Activated naive CD4-positive, alpha-beta T cell treated with anti-CD3 and anti-CD28 coated beads for 36 hours (primary cell): ENCODE measurements at regions of chr6 and their contacts with region 1.

Region 1: DNA sequence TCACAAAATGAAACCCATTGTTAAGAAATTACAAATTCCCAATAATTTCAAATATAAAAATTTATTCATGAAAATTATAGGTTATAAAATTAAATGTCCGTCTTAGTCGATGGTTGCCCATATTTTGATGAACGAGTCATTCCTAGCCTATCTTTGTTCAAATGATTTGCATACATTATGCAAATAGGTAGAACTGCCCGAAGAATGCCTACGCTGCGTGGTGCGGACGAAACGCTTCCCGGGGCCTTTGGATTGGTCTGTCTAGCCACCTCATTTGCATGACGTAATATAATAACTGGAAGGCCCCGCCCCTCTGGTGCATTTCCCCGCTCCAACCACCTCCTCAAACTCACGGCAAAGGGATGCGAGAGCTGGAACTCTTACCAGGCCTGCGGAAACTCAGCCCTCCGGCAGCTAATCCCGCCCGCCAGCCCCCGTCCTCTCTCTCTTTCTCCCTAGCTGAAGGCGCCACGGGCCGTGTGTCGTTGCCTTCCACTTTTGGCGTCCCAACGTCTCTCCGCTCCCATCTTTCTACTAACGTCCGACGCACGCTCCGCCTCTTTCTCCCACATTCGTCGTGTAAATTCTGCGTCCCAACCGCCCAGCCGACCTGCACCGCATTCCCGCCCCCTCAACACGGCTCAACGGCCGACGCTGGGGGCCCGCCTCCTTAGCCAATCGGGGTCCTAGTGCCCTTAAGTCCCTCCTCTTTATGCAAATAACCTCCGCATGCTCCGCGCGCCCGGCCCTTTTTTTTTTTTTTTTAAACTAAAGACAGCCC is 520 bp upstream of the PRRC2A start:
- DNase-seq: peak; percentile 99
- H3K4me3 Mint-ChIP-seq: peak overlapping the region; percentile 83
- H3K27ac Mint-ChIP-seq: peak overlapping the region; percentile 97
- H3K4me1 Mint-ChIP-seq: peaks cover 55% of the 10 kb centered on the region
- H3K27me3 Mint-ChIP-seq: no peaks in the 10 kb centered on the region

Region 2: DNA sequence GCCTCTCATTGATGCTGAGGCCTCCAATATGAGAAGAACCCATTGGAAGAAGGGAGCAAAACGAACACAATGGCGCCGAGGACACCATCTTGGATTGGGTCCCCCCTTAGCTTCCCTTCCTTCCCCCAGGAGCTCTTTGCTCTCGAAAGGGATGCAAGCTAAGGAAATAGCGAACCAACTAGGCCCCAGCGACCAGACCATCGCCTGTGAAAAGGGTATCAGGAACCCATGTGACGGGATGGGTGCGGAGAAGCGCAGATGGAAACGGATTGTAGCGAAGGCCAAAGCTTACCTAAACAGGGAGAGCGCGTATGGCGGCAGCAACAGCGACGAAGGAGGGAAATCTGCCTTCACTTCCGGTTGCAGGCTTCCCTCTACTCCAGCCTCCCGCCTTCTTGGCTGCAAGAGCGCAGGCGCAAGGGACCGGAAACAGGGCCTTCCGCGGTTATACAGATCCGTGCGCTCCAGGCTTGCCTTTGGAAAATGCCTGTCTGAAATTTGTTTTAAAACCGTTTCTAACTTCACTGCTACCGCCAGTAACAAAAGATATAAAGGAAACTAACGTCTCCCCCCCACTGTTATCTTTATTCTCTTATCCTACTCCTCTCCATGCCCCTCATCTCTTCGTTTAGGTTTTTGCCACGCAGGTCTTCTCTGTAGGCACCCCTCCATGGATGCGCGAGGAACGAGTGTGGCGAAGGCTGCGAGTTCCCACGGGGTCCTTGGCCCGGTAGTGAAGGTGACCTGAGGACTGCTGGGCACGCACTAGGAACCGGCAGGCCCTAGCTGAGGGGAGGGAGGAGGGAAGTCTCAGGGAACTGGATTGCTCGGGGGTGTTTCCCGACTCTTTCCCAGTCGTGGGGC is 78.1 kb before region 1 on chr6 and contains the start of gene DDX39B:
- CTCF ChIA-PET with region 1: interaction called, 5 read pairs
- intact Hi-C with region 1: loop called (anchors 1 kb)
- DNase-seq: peak; percentile 95
- H3K4me3 Mint-ChIP-seq: peak within 1 kb of the TSS; percentile 93
- H3K27ac Mint-ChIP-seq: peak within 1 kb of the TSS; percentile 99
- H3K4me1 Mint-ChIP-seq: peaks cover 40% of the 10 kb centered on the region
- H3K27me3 Mint-ChIP-seq: no peaks in the 10 kb centered on the region
- total RNA-seq, gene DDX39B: 600 to 624 TPM

Region 3: DNA sequence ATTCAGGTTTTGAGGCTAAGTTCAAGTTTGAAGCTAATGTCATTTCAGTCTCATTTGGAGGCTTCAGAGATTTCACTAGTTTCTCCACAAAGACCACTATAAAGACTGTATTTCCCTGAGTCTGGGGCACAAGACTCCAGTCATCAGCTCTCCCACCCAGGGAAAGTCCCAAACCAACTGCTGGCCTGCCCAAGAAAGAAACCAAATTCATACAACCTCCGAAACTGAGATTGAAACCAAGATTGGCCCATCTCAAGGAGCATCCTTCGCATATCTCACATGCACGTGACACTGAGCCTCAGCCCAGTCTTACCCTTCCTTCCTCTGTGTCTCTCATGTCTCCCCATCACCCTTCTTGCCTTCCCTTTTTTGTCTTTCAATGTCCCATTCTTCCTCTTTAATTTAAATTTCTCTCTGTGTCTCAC is 51.4 kb before region 1 on chr6:
- CTCF ChIA-PET with region 1: no interaction called
- intact Hi-C with region 1: loop called (anchors 1 kb)
- DNase-seq: peak; percentile 85
- H3K4me3 Mint-ChIP-seq: peak overlapping the region; percentile 34
- H3K27ac Mint-ChIP-seq: peak overlapping the region; percentile 83
- H3K4me1 Mint-ChIP-seq: peaks cover 76% of the 10 kb centered on the region
- H3K27me3 Mint-ChIP-seq: no peaks in the 10 kb centered on the region

Region 4: DNA sequence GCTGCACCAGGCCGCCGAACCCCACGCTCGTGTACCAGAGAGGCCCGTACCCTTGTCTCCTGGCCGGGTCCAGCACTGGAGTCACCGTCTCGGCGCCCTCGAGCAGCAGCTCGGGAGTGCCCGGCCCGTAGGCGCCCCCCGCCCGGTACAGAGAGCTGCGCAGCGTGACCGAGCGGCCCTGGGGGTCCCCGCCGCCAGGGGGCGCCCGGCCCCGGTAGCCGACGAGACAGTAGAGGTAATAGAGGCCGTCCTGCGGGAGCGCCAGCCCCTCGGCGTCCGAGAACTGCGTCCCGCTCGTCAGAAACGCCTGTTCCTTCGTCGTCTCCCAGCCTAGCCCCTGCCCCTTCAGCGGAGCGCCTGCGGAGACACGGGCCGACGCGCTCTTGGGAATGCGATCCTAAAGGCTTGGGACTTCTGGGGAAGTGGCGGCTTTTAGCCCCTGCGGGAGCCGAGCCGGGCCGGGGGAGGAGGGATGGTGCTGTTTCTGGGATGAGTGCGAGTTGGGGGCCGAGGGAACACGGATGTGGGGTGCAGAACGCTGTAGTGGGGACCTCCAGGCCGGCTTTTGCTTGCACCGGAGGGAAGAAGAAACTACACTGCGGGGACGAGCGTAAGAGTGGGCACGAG is 39.1 kb before region 1 on chr6:
- CTCF ChIA-PET with region 1: interaction called, 3 read pairs
- intact Hi-C with region 1: loop called (anchors 1 kb)
- DNase-seq: peak; percentile 90
- H3K4me3 Mint-ChIP-seq: peak overlapping the region; percentile 99
- H3K27ac Mint-ChIP-seq: peak overlapping the region; percentile 99
- H3K4me1 Mint-ChIP-seq: peaks cover 50% of the 10 kb centered on the region
- H3K27me3 Mint-ChIP-seq: no peaks in the 10 kb centered on the region

Region 5: DNA sequence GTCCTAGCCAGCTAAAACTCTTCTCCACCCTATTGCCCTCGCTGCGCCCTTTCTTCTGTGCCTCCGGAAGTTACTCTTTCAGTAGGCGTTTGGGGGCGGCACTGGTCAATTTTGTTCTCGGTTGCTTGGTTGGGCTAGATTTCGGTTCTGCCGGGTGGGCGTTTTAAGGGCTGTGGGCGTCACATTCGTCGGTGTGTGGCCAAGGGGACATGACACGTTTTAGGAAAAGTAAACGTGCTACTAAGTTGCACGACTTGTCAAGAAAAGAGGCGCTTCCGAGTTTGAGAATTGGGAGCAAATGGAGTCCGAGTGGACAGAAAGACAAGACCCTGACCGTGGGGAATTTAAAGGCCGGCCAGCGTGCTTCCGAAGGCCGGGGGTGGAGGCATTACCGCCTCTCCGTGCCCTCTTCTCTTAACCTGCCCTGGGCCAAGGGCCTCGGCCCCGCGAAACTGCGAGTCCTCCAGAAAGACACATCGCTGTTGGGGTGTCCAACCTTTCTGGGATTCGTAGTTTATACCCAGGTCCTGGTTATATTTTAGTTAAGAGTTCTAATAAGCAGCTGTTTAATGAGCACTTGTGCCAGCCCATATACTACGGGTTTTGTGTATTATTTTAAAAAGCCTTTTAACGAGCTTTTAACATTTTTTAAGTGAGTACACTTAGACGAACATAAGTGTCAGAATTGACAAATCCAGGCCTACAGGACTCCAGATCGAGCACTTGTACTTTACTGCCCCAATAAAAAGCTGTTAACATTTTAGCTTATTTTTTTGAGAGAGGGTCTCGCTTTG is 33.1 kb after region 1 on chr6:
- CTCF ChIA-PET with region 1: interaction called, 3 read pairs
- intact Hi-C with region 1: loop called (anchors 1 kb)
- DNase-seq: peak; percentile 92
- H3K4me3 Mint-ChIP-seq: peak overlapping the region; percentile 96
- H3K27ac Mint-ChIP-seq: peak overlapping the region; percentile 98
- H3K4me1 Mint-ChIP-seq: peaks cover 44% of the 10 kb centered on the region
- H3K27me3 Mint-ChIP-seq: no peaks in the 10 kb centered on the region

Region 6: GRCh38 chr6:31702819-31703522 is 83.0 kb after region 1 on chr6 and contains the start of gene ABHD16A:
- CTCF ChIA-PET with region 1: no interaction called
- intact Hi-C with region 1: loop called (anchors 1 kb)
- DNase-seq: peak; percentile 99
- H3K4me3 Mint-ChIP-seq: peak within 1 kb of the TSS; percentile 99
- H3K27ac Mint-ChIP-seq: peak within 1 kb of the TSS; percentile 97
- H3K4me1 Mint-ChIP-seq: peaks cover 22% of the 10 kb centered on the region
- H3K27me3 Mint-ChIP-seq: no peaks in the 10 kb centered on the region
- total RNA-seq, gene ABHD16A: 19.9 to 22.5 TPM

Region 7: GRCh38 chr6:31717499-31718222 is 97.7 kb after region 1 on chr6:
- CTCF ChIA-PET with region 1: no interaction called
- intact Hi-C with region 1: no loop called
- DNase-seq: no peak
- H3K4me3 Mint-ChIP-seq: no peak overlapping the region
- H3K27ac Mint-ChIP-seq: no peak overlapping the region
- H3K4me1 Mint-ChIP-seq: peaks cover 2% of the 10 kb centered on the region
- H3K27me3 Mint-ChIP-seq: no peaks in the 10 kb centered on the region

Region 8: DNA sequence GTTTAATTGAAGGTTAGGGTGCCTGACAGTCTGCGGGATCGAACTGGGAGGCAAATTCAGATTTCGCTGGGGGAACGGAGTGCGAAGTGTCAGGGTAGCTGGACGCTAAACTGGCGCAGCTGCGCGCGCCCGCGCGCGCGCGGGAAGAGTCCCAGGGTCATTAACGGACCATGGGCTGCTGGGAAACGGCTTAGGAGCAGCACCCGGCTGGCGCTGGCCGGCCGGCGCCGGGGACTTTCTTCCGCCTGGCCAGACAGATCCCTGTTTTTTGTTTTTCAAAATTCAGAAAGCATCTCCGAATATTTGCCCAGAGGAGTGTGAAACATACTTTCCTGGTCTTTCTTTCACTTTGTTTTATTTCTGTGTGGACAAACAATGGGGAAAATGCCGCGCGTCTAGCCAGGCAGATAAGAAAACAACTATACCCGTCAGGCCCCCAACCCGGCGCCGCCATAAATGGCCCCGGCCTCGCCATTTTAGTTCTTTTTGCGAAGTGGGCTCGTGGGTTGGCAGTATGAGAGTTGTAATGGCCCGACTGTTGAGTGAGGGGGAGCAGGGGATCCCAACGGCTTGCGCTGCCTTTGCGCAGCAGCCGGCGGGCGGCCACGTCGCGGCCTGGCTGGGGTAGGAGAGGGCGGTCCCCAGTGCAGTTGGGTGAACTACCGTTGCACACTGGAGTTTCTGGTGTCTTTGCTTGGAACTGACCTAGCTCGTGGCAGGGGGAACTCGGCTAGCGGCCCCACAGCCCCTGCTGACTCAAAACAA is 214.6 kb after region 1 on chr6:
- CTCF ChIA-PET with region 1: no interaction called
- intact Hi-C with region 1: loop called (anchors 1 kb)
- DNase-seq: peak; percentile 80
- H3K4me3 Mint-ChIP-seq: peak overlapping the region; percentile 94
- H3K27ac Mint-ChIP-seq: peak overlapping the region; percentile 98
- H3K4me1 Mint-ChIP-seq: peaks cover 46% of the 10 kb centered on the region
- H3K27me3 Mint-ChIP-seq: no peaks in the 10 kb centered on the region